ENCODE measurements at regions of chr6 and their contacts with region 1.

Region 1: GRCh38 chr6:37365762-37366161 is 12.0 kb downstream of the RNF8 start:
- DNase-seq: no peak
- H3K4me3 ChIP-seq: no peak overlapping the region
- H3K27ac ChIP-seq: no peak overlapping the region
- H3K4me1 ChIP-seq: no peaks in the 10 kb centered on the region
- H3K27me3 ChIP-seq: no peaks in the 10 kb centered on the region
- CTCF ChIP-seq: no peak; the same call in 1 of the 2 replicates

Region 2: DNA sequence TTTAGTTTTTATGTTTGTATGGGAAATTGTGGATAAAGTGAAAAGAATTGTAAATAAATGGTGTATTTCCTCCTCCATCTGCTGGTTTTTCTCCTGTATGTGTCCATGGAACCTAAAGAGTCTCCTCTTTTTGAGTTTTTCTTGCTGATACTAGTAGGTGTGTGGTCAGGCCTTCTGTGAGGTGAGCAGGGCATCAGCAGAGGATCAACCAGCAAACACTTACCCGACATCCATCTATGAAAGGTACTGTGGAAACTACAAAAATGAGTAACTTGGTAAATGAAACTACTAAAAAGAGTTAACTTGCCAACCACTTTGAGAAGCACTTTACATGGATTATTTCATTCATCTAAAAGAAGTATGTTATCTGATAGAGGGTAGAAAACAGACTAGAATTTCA is 32.9 kb before region 1 on chr6:
- CTCF ChIA-PET with region 1: interaction called, 20 read pairs
- POLR2A ChIA-PET with region 1: no interaction called
- intact Hi-C with region 1: no loop called
- DNase-seq: no peak
- H3K4me3 ChIP-seq: no peak overlapping the region
- H3K27ac ChIP-seq: no peak overlapping the region
- H3K4me1 ChIP-seq: no peaks in the 10 kb centered on the region
- H3K27me3 ChIP-seq: no peaks in the 10 kb centered on the region
- CTCF ChIP-seq: no peak

Measured in PC-9 (cell line).